ENCODE measurements at regions of chr6 and their contacts with region 1.

Region 1: GRCh38 chr6:32752580-32752979 is 10.8 kb downstream of the HLA-DQB2 start:
- DNase-seq: no peak
- H3K4me3 ChIP-seq: no peak overlapping the region
- H3K27ac ChIP-seq: no peak overlapping the region
- H3K4me1 ChIP-seq: no peaks in the 10 kb centered on the region
- H3K27me3 ChIP-seq: no peaks in the 10 kb centered on the region
- CTCF ChIP-seq: no peak
- EP300 ChIP-seq: no peak
- POLR2A ChIP-seq: no peak

Region 2: DNA sequence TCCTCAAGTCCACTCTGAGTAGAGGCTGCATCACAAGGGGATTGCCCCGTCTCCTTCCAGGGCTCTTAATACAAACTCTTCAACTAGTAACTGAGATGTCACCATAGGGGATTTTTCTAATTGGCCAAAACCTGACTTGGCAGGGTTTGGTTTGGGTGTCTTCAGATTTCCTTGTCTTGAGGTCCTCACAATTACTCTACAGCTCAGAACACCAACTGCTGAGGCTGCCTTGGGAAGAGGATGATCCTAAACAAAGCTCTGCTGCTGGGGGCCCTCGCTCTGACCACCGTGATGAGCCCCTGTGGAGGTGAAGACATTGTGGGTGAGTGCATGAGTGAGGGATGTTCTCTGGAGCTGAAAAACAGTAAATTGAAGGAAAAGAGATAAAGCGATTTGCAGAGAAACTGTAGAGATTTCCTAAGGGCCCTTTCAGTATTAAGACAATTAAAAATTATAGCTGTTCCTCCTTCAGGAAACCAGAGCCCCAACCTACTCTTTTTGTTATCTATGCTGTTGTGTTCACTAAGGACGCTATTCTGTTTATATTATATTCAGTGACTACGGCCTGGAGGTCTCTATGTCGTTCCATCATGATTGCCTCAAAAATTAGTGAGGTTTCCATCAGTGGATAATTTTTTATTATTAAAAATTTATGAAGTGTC is 115.2 kb before region 1 on chr6 and contains the start of gene HLA-DQA1:
- intact Hi-C with region 1: loop called in 1 of 4 experiments (anchors 10 kb)
- DNase-seq: no peak
- H3K4me3 ChIP-seq: no peak within 1 kb of the TSS
- H3K27ac ChIP-seq: no peak within 1 kb of the TSS
- H3K4me1 ChIP-seq: no peaks in the 10 kb centered on the region
- H3K27me3 ChIP-seq: no peaks in the 10 kb centered on the region
- CTCF ChIP-seq: no peak
- EP300 ChIP-seq: no peak
- POLR2A ChIP-seq: no peak
- total RNA-seq, gene HLA-DQA1: 0.72 to 20.9 (median 10.1) TPM

Region 3: DNA sequence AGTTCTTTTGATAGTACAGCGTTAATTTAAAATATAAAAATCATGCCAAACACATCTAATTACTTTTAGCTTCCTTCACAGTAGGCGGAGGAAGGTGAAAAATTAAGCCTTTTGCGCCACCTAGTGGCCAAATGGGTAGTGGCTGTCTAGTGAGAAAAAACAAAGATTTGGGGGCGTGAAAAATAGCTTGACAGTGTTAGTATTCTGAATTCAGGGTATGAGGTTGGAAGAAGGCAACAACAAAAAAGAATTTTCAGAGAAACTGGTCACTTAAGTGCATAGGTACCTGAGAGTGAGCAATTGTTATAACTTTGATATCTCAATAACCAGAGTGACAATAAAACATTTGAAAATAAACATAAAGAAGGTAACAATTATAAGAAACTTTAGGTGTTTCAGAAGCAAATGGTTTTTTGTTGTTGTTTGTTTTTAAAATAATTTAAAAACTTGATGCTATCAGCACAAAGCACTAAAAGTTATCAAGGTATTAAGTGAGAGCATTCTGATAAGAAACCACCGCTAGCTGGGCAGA is 115.7 kb after region 1 on chr6:
- intact Hi-C with region 1: no loop called
- DNase-seq: peak; percentile 78 to 88 (median 86)
- H3K4me3 ChIP-seq: no peak overlapping the region
- H3K27ac ChIP-seq: no peak overlapping the region
- H3K4me1 ChIP-seq: no peaks in the 10 kb centered on the region
- H3K27me3 ChIP-seq: no peaks in the 10 kb centered on the region
- CTCF ChIP-seq: peak; percentile 83 to 94 (median 91)
- EP300 ChIP-seq: no peak
- POLR2A ChIP-seq: no peak

Measured in ovary (tissue), 10 donors.